ENCODE measurements at regions of chr16 and their contacts with region 1.

Region 1: DNA sequence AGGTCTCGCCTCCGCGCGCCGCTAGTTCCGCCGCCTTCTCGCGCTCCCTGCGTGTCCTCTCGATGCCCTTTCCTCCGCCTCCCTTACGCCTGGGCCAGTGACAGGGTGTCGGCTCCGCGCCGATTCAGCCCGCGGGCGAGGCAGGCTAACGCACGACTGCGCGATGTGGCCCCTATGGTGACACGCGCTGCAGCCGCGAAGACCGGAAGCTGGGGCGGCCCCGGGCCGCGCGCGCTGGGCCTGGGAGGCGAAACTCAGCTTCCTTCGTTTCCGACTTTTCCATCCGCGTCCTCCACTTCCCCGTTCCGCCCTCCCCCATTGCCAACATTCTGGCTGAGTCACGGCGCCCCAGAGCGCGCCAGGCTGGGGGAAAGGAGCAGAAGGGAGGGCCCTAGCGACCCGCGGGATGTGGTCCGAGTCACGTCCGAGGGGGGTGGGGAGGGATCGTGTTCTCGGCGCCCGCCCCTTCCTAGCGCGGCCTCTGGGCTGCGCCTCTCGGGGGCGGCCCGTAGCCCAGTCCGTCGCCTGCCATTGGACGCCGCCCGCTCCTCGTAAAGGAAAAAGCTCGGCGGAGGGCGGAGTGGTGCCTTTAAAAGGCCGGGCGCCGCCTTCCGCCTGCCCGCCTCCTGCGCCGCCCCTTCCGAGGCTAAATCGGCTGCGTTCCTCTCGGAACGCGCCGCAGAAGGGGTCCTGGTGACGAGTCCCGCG is at the start of gene ALDOA:
- DNase-seq: peak; percentile 92
- H3K4me3 ChIP-seq: peak within 1 kb of the TSS; percentile 99
- H3K27me3 ChIP-seq: no peaks in the 10 kb centered on the region
- CTCF ChIP-seq: no peak
- polyA plus RNA-seq, gene ALDOA: 754 and 1,788 TPM in 2 replicates

Region 2: DNA sequence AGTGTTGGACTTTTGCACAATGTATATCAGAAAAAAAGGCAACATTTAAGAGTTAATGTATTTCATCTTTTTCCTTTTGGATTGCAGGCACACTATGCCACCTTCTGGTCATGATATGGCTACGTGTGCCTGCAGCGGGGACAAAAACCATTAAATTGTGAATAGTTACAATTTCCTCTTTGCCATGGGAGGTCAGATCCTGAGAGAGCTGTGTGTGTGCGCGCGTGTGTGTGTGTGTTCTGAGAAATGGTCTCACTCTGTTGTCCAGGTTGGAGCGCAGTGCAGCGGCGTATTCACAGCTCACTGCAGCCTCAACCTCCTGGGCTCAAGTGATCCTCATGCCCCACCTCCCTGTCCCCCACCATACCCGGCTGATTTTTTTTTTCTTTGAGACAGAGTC is 1515.9 kb before region 1 on chr16:
- CTCF ChIA-PET with region 1: no interaction called
- POLR2A ChIA-PET with region 1: no interaction called
- DNase-seq: no peak
- H3K4me3 ChIP-seq: no peak overlapping the region
- H3K27me3 ChIP-seq: 0 out of 2 replicates have a peak, but pooled peaks cover 1% of the 10 kb centered on the region
- CTCF ChIP-seq: peak; percentile 53

Region 3: DNA sequence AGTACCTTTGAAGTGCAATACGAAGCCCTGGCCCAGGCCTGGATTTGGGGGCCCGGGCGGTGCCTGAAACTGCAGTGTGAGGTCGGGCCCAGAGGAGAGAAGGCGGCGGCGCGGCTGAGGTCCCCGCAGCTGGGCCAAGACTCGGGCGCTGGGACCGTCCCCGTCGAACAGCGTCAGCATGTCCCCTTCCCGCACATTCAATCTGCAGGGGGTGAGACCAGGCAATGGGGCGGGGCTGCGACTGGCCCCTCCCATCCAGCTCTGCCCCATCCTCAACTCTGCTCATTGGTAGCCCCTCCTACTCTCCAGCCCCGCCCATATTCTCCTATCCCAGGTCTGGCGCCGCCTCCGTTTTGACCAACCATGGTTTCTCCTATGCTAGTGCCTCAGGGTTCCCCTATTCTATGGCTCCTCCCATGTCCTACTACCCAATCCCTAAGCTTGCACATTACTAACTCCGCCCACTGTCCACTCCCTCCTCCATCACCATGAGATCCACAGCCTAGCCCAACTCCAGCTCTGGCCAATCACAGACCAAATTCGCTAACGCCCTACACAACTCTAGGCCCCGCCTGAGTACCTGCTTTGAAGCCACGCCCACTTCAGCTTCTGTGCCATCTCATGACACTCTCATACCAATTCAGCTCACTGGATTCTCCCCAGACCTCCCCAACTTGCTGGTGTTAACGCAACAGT is 187.9 kb before region 1 on chr16:
- CTCF ChIA-PET with region 1: no interaction called
- POLR2A ChIA-PET with region 1: no interaction called
- DNase-seq: no peak
- H3K4me3 ChIP-seq: no peak overlapping the region
- H3K27me3 ChIP-seq: peaks cover 4% of the 10 kb centered on the region; the same call in 1 of the 2 replicates
- CTCF ChIP-seq: no peak

Region 4: DNA sequence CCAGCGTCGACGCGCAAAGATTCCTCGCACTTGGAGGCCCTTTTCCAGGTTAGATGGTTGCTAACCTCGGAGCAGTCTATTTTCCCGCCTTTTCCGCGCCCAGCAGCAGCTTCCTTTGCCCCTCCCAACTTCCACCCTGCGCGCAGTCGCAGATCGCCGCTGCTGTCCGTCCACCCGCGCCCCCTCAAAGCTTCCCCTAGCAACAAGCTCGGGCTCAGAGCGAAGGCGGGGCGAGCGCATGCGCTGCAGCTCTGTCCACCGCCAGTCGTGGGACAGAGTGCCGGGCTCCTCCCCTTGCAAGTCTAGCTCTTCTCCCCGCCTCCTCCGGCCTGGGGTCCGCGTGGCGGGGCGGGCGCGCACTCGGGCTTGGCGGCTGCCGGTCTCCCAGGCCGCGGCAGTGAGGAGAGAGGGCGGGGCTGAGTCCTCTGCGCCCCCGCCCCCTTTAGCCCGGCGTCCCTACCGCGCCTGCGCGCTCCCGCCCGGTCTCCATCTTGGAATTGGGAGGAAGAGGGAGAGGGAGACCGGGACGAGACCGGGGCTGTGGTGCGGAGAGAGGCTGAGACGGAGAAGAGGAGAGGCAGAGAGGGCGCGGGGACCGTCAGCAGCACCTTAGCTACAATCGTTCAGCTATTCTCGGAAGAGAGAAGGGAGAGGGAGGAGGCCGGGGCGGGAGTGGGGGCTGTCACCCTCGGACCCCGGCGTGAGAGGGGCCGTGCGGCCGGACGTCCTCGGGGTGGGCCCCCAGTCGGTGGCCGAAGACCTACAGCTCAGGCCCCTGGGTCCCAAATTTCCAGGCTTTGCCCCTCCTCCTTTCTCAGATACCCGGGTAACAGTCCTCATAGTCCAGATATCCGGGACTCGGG is 91.7 kb before region 1 on chr16 and contains the start of gene TAOK2:
- CTCF ChIA-PET with region 1: no interaction called
- POLR2A ChIA-PET with region 1: no interaction called
- DNase-seq: peak; percentile 99
- H3K4me3 ChIP-seq: peak within 1 kb of the TSS; percentile 83
- H3K27me3 ChIP-seq: no peaks in the 10 kb centered on the region
- CTCF ChIP-seq: no peak
- polyA plus RNA-seq, gene TAOK2: 17.4 and 24.3 TPM in 2 replicates

Region 5: GRCh38 chr16:30010844-30011713 is 54.2 kb before region 1 on chr16 and contains the start of gene DOC2A:
- CTCF ChIA-PET with region 1: no interaction called
- POLR2A ChIA-PET with region 1: interaction called, 33 read pairs
- DNase-seq: no peak
- H3K4me3 ChIP-seq: peak within 1 kb of the TSS; percentile 51
- H3K27me3 ChIP-seq: peaks cover 11% of the 10 kb centered on the region
- CTCF ChIP-seq: no peak
- polyA plus RNA-seq, gene DOC2A: 0.26 and 0.64 TPM in 2 replicates

Region 6: GRCh38 chr16:30041846-30042267 is 23.4 kb before region 1 on chr16:
- CTCF ChIA-PET with region 1: no interaction called
- POLR2A ChIA-PET with region 1: interaction called, 12 read pairs
- DNase-seq: no peak
- H3K4me3 ChIP-seq: no peak overlapping the region
- H3K27me3 ChIP-seq: no peaks in the 10 kb centered on the region; the same call in 1 of the 2 replicates
- CTCF ChIP-seq: peak; percentile 44

Region 7: DNA sequence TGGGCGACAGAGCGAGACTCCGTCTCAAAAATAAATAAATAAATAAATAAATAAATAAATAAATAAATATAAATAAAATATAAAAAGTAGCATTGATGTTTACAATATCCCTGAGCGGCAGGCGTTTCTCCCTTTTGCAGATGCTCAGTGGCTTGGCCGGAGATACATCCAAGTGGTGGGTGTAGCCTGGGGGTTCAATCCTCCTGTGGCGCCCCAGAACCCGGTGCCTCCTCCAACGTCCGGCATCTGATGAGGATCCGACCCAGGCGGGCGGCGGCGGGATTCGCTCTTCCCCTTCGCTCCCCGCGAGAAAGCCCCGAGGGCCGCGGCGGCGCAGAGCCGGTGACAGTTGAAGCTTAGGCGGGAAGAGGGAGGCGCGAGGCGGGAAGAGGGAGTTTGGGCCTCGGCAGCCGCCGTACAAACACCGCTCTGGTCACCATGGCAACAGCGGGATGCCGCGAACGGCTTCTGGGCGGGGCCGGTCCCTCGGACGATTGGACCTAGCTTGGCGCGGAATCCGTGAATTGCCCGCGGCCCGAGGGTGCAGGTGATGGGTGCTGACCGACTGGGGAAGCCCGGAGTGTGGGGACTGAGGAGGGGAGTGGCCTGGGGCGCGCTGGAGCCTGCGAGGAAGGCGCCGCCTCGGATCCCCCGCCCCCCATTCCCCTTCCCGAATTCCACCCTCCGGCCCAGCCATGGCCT is 12.5 kb before region 1 on chr16:
- CTCF ChIA-PET with region 1: interaction called, 8 read pairs
- POLR2A ChIA-PET with region 1: interaction called, 11 read pairs
- DNase-seq: no peak
- H3K4me3 ChIP-seq: peak overlapping the region; percentile 89
- H3K27me3 ChIP-seq: no peaks in the 10 kb centered on the region
- CTCF ChIP-seq: no peak

Region 8: GRCh38 chr16:30149250-30149930 is 84.1 kb after region 1 on chr16:
- CTCF ChIA-PET with region 1: no interaction called
- POLR2A ChIA-PET with region 1: no interaction called
- DNase-seq: no peak
- H3K4me3 ChIP-seq: no peak overlapping the region
- H3K27me3 ChIP-seq: no peaks in the 10 kb centered on the region
- CTCF ChIP-seq: no peak